Esophagus squamous epithelium (tissue), 5 donors: ENCODE measurements at regions of chr4 and their contacts with region 1.

Region 1: DNA sequence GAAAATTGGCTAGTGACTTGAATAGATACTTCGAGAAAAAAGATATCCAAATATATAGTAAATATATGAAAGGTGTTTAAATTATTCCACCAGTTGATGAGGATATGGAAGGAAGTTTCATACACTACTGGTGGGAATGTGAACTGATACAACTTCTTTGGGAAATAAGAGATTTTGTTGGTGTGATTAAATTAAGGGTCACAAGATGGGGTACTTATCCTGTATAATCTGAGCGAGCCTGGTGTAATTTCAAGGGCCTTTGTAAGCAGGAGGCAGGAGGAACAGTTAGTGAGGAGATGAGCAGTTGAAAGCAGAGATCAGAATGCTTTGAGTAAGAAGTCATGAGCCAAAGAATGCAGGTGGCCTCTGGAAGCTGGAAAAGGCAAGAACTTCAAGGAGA is 192.2 kb downstream of the KCTD8 start:
- DNase-seq: no peak
- H3K4me3 ChIP-seq: no peak overlapping the region
- H3K27ac ChIP-seq: no peak overlapping the region
- H3K4me1 ChIP-seq: no peaks in the 10 kb centered on the region
- H3K27me3 ChIP-seq: no peaks in the 10 kb centered on the region
- CTCF ChIP-seq: no peak
- POLR2A ChIP-seq: no peak

Region 2: DNA sequence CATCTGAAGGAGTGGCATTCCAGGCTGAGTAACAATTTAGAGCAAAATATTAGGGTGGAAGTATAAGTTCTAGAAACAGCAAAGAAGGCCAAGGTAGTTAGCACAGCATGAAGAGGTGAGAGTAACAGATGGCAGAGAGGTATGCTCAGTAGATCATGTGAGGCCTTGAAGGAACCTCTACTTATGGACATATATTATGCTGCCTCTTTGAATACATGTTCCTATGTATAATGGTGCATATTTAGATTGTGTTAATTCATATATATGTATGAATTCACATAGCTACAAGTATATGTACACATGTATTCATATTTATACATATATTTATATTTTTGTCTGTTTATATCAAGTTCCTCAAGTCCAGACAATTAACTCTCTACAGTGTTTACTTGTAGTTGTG is 163.0 kb before region 1 on chr4:
- intact Hi-C with region 1: loop called (anchors 10 kb)
- DNase-seq: no peak
- H3K4me3 ChIP-seq: no peak overlapping the region
- H3K27ac ChIP-seq: no peak overlapping the region
- H3K4me1 ChIP-seq: no peaks in the 10 kb centered on the region
- H3K27me3 ChIP-seq: no peaks in the 10 kb centered on the region
- CTCF ChIP-seq: no peak
- POLR2A ChIP-seq: no peak

Region 3: GRCh38 chr4:44157721-44158256 is 98.6 kb before region 1 on chr4:
- intact Hi-C with region 1: no loop called
- DNase-seq: no peak
- H3K4me3 ChIP-seq: no peak overlapping the region
- H3K27ac ChIP-seq: no peak overlapping the region
- H3K4me1 ChIP-seq: no peaks in the 10 kb centered on the region
- H3K27me3 ChIP-seq: no peaks in the 10 kb centered on the region
- CTCF ChIP-seq: no peak
- POLR2A ChIP-seq: no peak